Calu3 (cell line): ENCODE measurements at regions of chr7 and their contacts with region 1.

Region 1: GRCh38 chr7:101542527-101543241 is 86.4 kb downstream of the MYL10 start:
- DNase-seq: peak; percentile 77
- H3K4me3 Mint-ChIP-seq: no peak overlapping the region
- H3K27ac Mint-ChIP-seq: no peak overlapping the region
- H3K4me1 Mint-ChIP-seq: no peaks in the 10 kb centered on the region
- H3K27me3 Mint-ChIP-seq: peaks cover 9% of the 10 kb centered on the region
- CTCF ChIP-seq: peak; percentile 87

Region 2: DNA sequence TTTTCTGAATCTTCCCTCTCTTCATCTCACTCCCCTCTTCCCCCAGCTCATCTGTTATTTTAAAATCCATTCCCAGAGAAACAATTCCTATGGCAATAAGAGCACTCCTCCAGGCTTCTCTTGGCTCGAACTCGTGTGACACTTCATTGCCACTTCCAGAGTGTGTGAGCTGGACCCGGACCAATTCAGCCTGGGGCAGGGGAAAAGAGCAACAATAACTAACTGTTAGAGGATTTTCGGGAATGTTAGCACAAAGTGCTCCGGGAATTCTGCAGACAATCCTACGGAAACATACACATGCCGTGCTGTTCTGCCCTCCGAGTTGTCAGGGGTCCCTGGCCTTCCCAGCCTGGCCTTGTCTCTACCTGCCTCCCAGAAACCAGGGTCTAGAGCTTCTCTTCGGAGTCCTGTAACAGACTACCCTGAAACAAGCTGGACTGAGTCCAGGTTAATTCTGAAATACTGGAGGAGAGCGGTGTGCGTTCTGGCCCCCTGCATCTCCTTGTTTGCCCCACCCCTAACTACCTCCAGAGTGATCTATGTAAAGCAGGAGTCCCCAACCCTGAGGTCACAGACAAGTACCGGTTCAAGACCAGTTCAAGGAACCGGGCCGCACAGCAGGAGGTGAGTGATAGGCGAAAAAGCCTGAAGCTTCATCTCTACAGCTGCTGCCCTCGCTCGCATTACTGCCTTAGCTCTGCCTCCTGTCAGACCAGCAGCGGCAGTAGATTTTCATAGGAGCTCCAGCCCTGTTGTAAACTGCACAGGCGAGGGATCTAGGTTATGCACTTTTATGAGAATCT is 168.7 kb before region 1 on chr7:
- CTCF ChIA-PET with region 1: no interaction called
- intact Hi-C with region 1: no loop called
- DNase-seq: no peak
- H3K4me3 Mint-ChIP-seq: no peak overlapping the region
- H3K27ac Mint-ChIP-seq: no peak overlapping the region
- H3K4me1 Mint-ChIP-seq: no peaks in the 10 kb centered on the region
- H3K27me3 Mint-ChIP-seq: peaks cover 50% of the 10 kb centered on the region
- CTCF ChIP-seq: no peak

Region 3: DNA sequence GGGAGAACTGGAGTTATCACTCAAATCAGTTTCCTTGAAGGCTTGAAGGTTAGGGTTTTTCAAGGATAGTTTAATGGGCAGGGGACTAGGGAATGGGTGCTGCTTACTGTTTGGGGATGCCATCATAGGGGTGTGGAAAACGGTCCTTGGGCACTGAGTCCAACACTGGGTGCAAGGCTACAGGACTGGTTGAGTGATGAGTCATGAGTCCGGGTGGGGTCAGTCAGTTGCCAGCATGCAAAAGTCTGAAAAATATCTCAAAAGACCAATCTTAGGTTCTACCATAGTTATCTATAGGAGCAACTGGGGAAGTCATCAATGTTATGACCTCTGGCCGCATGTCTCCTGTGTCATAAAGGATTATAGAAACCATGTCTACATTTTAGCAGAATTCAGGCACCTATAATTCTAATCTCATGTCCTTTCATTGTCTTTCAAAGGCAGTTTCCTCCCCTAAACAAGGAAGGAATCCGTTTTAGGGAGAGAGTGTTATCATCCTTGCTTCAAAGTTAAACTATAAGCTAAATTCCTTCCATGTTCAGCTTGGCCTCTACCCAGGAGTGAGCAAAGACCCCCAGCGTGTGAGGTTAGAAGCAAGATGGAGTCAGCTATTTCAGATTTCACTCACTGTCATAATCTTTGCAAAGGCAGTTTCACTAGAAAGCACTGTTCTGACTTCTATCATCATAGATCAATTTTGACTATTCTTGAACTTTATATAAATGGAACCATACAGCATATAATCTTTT is 85.5 kb before region 1 on chr7:
- CTCF ChIA-PET with region 1: no interaction called
- intact Hi-C with region 1: no loop called
- DNase-seq: no peak
- H3K4me3 Mint-ChIP-seq: no peak overlapping the region
- H3K27ac Mint-ChIP-seq: no peak overlapping the region
- H3K4me1 Mint-ChIP-seq: no peaks in the 10 kb centered on the region
- H3K27me3 Mint-ChIP-seq: no peaks in the 10 kb centered on the region
- CTCF ChIP-seq: no peak

Region 4: DNA sequence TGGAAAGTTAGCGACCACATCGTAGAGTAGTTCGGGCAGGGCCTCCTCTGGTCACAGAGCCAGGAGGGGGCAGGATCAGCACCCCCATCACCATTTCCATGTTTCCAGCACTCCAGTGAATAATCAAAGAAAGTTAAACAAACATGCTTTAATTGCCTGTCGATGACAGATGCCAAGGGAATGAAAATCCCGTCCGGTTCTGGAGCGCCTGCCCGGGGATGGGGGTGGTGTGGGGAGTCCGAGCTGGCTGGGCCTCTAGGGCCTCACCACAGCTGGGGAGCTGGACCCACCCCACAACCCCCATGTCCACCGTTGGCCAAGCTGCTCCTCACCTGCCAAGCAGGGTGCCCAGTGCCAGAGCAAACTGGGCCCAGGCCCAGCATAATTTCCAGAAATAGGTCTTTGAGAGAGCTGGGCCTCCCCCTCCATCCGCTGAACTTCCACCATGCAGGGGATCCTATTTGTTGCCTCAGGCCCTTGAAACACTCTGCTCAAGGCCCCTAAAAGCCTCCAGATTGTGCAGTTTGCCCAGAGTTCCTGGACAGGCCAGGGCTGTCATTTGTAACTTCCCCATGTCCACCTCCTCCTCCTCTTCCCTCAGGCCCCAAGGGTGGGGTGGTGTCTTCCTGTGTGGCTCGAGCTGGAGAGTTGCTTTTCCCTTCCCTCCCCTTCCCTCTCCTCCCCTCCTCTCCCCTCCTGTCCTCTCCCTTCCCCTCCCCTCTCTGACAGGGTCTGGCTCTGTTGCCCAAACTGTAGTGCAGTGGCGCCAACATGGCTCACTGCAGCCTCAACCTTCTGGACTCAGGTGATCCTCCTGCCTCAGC is 14.6 kb before region 1 on chr7:
- CTCF ChIA-PET with region 1: no interaction called
- intact Hi-C with region 1: no loop called
- DNase-seq: no peak
- H3K4me3 Mint-ChIP-seq: no peak overlapping the region
- H3K27ac Mint-ChIP-seq: no peak overlapping the region
- H3K4me1 Mint-ChIP-seq: no peaks in the 10 kb centered on the region
- H3K27me3 Mint-ChIP-seq: peaks cover 36% of the 10 kb centered on the region
- CTCF ChIP-seq: no peak

Region 5: GRCh38 chr7:101688183-101688831 is 145.6 kb after region 1 on chr7:
- CTCF ChIA-PET with region 1: no interaction called
- intact Hi-C with region 1: loop called (anchors 10 kb)
- DNase-seq: peak; percentile 79
- H3K4me3 Mint-ChIP-seq: no peak overlapping the region
- H3K27ac Mint-ChIP-seq: no peak overlapping the region
- H3K4me1 Mint-ChIP-seq: peaks cover 10% of the 10 kb centered on the region
- H3K27me3 Mint-ChIP-seq: no peaks in the 10 kb centered on the region
- CTCF ChIP-seq: peak; percentile 74

Region 6: DNA sequence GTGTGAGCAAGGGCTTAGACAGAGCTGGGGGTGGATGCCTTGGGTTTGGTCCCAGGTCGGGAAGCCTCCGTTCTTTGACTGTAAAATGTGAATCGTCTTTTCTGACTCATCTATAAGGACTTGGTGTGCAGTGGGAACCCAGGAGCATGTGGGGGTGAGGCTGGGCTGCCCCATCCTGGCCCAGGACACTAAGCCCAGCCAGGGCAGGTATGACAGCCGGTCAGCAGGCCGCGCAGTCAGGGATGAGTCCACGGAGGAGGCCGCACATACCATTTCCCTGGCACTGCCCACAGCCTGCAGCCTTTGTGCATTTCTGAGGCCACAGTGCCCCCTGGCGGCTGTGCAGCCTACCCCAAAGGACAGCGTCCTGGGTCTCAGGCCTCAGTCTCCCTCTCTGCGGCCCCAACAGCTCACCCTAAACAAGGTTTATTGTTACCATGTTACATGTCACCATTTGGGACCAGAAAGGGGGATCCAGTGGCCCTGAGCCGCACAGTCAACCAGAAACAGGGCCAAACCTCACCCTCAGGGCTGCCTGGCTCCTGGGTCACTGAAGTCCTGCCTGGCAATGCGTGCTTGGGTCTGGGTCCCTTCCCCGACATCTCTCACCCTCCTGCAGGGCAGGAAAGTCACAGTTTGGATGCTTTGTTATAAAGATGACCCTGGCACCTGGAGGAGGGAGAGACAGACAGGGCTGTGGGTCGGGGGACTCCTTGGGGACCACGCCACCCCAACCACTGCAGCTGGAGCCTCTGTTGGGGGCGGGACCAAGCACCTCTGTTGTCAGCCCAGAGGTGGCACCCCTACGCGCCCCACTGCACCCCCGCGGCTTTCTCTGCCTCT is 729.6 kb after region 1 on chr7:
- CTCF ChIA-PET with region 1: interaction called, 16 read pairs
- intact Hi-C with region 1: loop called (anchors 2 kb)
- DNase-seq: peak; percentile 80
- H3K4me3 Mint-ChIP-seq: no peak overlapping the region
- H3K27ac Mint-ChIP-seq: no peak overlapping the region
- H3K4me1 Mint-ChIP-seq: peaks cover 18% of the 10 kb centered on the region
- H3K27me3 Mint-ChIP-seq: peaks cover 16% of the 10 kb centered on the region
- CTCF ChIP-seq: peak; percentile 80